RWPE1 (cell line): ENCODE measurements at regions of chr14 and their contacts with region 1.

Region 1: GRCh38 chr14:94548999-94549985 is 11.9 kb upstream of the SERPINA4 start:
- DNase-seq: peak; percentile 58
- H3K27ac ChIP-seq: no peak overlapping the region
- CTCF ChIP-seq: peak; percentile 93

Region 2: DNA sequence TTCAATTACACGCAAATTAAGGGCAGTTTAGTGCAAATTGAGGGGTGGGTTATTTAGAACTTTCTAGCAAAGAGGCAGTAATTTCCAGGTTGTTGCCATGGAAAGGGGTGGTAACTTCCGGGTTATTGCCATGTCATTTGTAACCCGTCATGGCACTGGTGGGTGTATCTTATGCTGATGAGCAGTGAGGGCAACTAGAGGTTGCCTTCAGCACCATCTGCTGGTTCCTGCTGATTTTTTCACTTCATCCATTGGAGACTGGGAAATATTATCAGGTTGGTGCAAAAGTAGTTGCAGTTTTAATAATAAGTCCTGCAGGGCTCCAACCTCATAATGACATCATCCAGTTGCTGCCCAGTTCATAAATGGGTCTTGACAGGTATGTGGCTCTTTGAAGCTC is 12.5 kb before region 1 on chr14:
- CTCF ChIA-PET with region 1: interaction called, 17 read pairs
- POLR2A ChIA-PET with region 1: no interaction called
- DNase-seq: no peak
- H3K27ac ChIP-seq: no peak overlapping the region
- CTCF ChIP-seq: no peak